SK-MEL-5 (cell line): ENCODE measurements at regions of chr7 and their contacts with region 1.

Region 1: DNA sequence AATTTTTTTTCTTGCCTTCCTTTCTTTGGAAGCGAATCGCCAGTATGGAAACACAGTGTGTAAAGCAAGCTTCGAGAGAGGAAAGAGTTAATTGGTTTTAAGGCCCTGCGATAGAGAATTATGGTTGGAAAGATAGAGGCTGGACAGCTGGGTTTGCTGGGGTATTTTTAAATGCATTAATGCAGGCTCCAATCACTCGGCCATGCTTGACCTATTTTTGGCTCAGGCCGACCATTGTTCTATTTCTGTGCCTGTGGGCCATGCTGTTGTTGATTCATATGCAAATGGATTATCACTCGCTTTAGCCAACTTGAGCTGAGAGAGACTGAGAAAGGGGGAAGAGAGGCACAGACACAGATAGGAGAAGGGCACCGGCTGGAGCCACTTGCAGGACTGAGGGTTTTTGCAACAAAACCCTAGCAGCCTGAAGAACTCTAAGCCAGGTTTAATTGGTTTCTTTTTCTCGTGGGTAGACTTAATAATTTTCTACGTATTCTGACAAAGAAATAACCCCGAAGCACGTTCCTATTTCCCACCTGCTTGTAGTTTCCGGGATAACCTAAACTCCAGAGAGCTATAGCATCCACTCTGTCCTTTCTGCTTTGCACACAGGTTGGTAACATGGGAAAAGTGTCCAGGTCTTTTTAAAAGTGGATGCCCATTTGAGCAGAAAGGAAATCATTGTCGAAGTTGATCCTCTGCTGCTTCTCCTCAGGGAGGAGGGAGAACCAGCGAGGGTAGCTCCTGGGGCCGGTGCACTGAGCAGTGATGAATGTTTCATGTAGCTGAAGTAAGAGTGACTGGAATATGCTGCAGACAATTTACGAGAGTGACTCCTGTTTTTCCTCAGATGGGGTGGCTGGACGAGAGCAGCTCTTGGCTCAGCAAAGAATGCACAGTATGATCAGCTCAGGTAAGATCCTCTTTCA is at the start of gene HDAC9:
- DNase-seq: peak; percentile 83
- total RNA-seq, gene HDAC9: 19.9 and 20.3 TPM in 2 replicates

Region 2: DNA sequence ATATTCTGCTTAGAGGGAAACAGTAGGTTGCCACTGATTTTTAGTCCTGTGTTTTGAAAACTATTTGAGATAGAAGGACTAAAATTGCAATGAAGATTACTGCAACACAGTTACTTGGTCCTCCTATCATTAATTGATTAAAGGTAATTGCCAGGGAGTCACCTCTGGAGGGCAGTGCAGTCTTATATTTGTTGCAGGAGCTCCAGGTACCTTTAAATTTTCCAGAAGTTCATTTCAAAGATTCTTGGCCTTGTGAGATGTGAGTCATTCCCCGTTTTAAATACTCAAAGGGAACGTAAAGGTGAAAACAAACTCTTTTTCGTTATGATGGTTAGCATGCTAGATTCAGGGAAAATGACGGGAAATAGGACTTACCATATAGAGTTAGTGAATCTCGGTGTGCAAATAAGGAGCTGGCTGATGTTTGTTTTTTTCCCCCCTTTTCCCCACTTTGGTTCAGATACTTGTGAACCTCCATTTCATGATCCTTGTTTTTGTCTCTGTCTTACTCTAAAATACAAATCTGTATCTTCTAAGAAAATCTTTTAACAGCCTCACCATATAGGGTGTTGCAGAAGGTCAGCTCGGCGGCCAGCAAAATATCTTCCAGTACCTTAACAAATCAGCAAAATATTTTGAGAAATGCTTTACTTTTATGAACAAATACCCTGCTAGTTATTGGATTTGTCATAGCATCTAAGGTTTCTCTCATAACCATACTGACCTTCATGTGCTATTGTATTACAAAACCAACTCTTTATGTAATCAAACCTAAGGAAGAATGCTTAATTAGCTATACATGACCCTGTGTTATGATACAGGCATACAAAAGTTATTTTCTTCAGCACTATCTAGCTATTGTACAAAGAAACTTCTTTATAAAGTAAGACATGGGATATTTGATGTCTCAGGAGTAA is 143.1 kb before region 1 on chr7:
- in situ Hi-C with region 1: loop called (anchors 25 kb)
- DNase-seq: peak; percentile 81